MCF 10A (cell line): ENCODE measurements at regions of chr14 and their contacts with region 1.

Region 1: GRCh38 chr14:20613094-20614037 is 22.2 kb upstream of the RNASE12 start:
- DNase-seq: peak; percentile 96
- H3K4me3 Mint-ChIP-seq: no peak overlapping the region
- H3K27ac Mint-ChIP-seq: no peak overlapping the region
- H3K4me1 Mint-ChIP-seq: no peaks in the 10 kb centered on the region
- H3K27me3 Mint-ChIP-seq: no peaks in the 10 kb centered on the region
- CTCF ChIP-seq: peak; percentile 80

Region 2: GRCh38 chr14:20327005-20327869 is 286.1 kb before region 1 on chr14:
- CTCF ChIA-PET with region 1: interaction called, 152 read pairs
- POLR2A ChIA-PET with region 1: interaction called, 14 read pairs
- intact Hi-C with region 1: loop called (anchors 1 kb)
- DNase-seq: peak; percentile 78
- H3K4me3 Mint-ChIP-seq: no peak overlapping the region
- H3K27ac Mint-ChIP-seq: no peak overlapping the region
- H3K4me1 Mint-ChIP-seq: peaks cover 31% of the 10 kb centered on the region
- H3K27me3 Mint-ChIP-seq: no peaks in the 10 kb centered on the region
- CTCF ChIP-seq: peak; percentile 66

Region 3: GRCh38 chr14:20376071-20376588 is 237.2 kb before region 1 on chr14:
- CTCF ChIA-PET with region 1: no interaction called
- POLR2A ChIA-PET with region 1: no interaction called
- intact Hi-C with region 1: no loop called
- DNase-seq: no peak
- H3K4me3 Mint-ChIP-seq: no peak overlapping the region
- H3K27ac Mint-ChIP-seq: no peak overlapping the region
- H3K4me1 Mint-ChIP-seq: no peaks in the 10 kb centered on the region
- H3K27me3 Mint-ChIP-seq: no peaks in the 10 kb centered on the region
- CTCF ChIP-seq: no peak

Region 4: DNA sequence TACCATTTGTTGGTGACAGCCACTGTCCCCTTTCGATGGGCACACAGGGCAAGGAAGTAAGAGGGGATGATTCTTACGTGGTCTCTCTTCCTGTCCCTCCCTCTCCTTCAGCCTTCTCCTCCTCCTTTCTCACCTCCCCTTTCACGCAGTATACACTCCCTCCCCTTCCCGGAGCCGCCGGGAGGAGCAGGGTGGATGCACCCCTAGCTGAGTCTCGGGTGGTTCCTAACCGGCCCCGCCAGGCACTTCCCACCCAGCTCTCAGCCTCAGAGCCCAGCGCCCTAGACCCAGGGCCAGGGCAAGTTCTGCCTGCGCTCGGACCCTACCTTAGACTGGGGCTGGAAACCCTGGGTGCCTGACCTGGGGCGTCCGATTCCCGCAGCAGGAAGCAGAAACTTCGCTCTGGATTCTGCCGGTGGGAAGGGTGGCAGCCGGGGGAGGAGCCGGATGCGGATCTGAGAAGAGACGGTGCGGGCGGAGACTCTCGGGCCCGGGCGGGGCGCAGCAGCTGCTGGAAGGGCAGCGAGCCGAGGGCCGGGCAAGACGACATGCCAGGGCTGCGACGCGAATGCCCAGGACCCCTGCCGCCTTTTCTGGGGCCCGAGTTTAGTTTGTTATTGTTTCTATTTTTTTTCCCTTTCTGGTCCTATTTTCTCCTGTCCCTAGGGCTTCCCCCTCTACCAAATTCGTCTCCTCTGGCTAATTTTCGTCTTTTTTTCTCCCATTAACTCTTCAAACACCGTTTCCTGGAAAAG is 200.1 kb before region 1 on chr14 and contains the start of gene TEP1:
- CTCF ChIA-PET with region 1: interaction called, 30 read pairs
- POLR2A ChIA-PET with region 1: interaction called, 6 read pairs
- intact Hi-C with region 1: loop called (anchors 1 kb)
- DNase-seq: peak; percentile 87
- H3K4me3 Mint-ChIP-seq: peak within 1 kb of the TSS; percentile 77
- H3K27ac Mint-ChIP-seq: peak within 1 kb of the TSS; percentile 49
- H3K4me1 Mint-ChIP-seq: peaks cover 7% of the 10 kb centered on the region
- H3K27me3 Mint-ChIP-seq: no peaks in the 10 kb centered on the region
- CTCF ChIP-seq: no peak
- total RNA-seq, gene TEP1: 20.4 and 22.7 TPM in 2 replicates

Region 5: GRCh38 chr14:20489093-20489994 is 124.0 kb before region 1 on chr14:
- CTCF ChIA-PET with region 1: interaction called, 10 read pairs
- POLR2A ChIA-PET with region 1: no interaction called
- intact Hi-C with region 1: no loop called
- DNase-seq: peak; percentile 53
- H3K4me3 Mint-ChIP-seq: no peak overlapping the region
- H3K27ac Mint-ChIP-seq: peak overlapping the region; percentile 1
- H3K4me1 Mint-ChIP-seq: peaks cover 26% of the 10 kb centered on the region
- H3K27me3 Mint-ChIP-seq: no peaks in the 10 kb centered on the region
- CTCF ChIP-seq: no peak

Region 6: DNA sequence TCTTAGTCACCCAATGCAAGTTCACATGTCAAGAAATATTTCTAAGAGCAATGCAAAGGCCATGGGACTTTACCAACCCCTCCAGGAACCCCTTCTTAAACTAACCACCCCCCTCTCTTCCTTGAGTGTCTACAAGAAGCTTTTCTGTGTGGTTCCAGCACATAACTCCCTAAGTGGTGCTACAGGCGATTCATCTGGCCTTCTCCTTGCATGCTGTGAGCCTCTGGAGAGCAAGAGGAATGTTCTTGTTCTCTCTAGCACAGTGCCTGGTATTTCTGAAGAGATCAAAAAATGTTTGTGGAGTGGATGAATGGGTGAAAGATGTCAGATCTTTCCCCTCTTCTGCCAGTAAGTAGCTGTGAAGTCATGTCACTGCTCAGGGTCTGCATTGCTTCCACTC is 16.3 kb before region 1 on chr14:
- CTCF ChIA-PET with region 1: interaction called, 16 read pairs
- POLR2A ChIA-PET with region 1: interaction called, 5 read pairs
- intact Hi-C with region 1: no loop called
- DNase-seq: no peak
- H3K4me3 Mint-ChIP-seq: no peak overlapping the region
- H3K27ac Mint-ChIP-seq: no peak overlapping the region
- H3K4me1 Mint-ChIP-seq: no peaks in the 10 kb centered on the region
- H3K27me3 Mint-ChIP-seq: no peaks in the 10 kb centered on the region
- CTCF ChIP-seq: no peak

Region 7: GRCh38 chr14:20682435-20683124 is 69.2 kb after region 1 on chr14:
- CTCF ChIA-PET with region 1: interaction called, 89 read pairs
- POLR2A ChIA-PET with region 1: interaction called, 182 read pairs
- intact Hi-C with region 1: loop called (anchors 1 kb)
- DNase-seq: peak; percentile 92
- H3K4me3 Mint-ChIP-seq: no peak overlapping the region
- H3K27ac Mint-ChIP-seq: no peak overlapping the region
- H3K4me1 Mint-ChIP-seq: peaks cover 27% of the 10 kb centered on the region
- H3K27me3 Mint-ChIP-seq: no peaks in the 10 kb centered on the region
- CTCF ChIP-seq: no peak

Region 8: GRCh38 chr14:20751963-20752562 is 138.7 kb after region 1 on chr14:
- CTCF ChIA-PET with region 1: no interaction called
- POLR2A ChIA-PET with region 1: no interaction called
- intact Hi-C with region 1: no loop called
- DNase-seq: peak; percentile 17
- H3K4me3 Mint-ChIP-seq: no peak overlapping the region
- H3K27ac Mint-ChIP-seq: no peak overlapping the region
- H3K4me1 Mint-ChIP-seq: no peaks in the 10 kb centered on the region
- H3K27me3 Mint-ChIP-seq: no peaks in the 10 kb centered on the region
- CTCF ChIP-seq: no peak

Region 9: DNA sequence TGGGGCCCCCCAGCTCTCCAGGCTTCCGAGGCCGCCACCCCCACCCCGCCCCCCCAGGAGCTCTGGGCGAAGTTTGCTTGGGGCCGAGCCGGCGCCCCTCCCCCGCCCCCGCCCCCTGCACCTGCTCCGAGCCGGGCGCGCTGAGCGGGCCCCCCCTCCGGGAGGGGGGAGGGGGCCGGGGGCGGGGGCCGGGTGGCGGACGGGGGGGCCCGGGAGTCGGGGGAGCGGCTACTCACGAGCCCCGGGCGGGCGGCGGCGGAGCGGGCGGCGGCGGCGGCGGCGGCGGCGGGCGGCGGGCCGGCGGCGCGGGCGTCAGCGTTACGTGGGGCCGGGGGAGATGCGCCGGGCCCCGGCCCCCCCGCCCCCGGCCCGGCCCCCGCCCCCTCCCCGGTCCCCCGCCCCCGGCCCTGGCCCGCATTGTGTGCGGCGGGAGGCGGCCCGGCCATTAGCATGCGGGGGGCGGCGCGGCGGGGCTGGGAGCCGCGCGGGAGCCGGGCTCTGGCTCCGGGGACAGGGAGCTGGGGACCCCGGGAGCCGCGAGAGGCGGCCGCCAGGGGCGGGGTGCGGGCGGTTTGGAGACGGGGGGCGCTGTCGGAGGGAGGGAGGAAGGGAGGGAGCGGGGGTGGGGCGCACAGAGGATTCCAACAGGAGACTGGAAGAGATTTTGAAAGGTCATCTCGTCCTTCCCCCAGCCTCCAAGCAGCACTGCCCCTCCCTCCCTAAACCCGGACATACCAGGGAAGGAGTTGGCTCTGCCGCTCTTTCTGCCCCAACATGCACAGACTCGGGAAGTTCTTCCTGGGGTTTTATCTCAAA is 484.9 kb after region 1 on chr14 and contains the start of gene ZNF219:
- CTCF ChIA-PET with region 1: no interaction called
- POLR2A ChIA-PET with region 1: interaction called, 4 read pairs
- intact Hi-C with region 1: loop called (anchors 5 kb)
- DNase-seq: peak; percentile 67
- H3K4me3 Mint-ChIP-seq: peak within 1 kb of the TSS; percentile 85
- H3K27ac Mint-ChIP-seq: peak within 1 kb of the TSS; percentile 90
- H3K4me1 Mint-ChIP-seq: peaks cover 34% of the 10 kb centered on the region
- H3K27me3 Mint-ChIP-seq: no peaks in the 10 kb centered on the region
- CTCF ChIP-seq: no peak
- total RNA-seq, gene ZNF219: 18.4 and 33.8 TPM in 2 replicates